ENCODE measurements at regions of chr12 and their contacts with region 1.

Region 1: DNA sequence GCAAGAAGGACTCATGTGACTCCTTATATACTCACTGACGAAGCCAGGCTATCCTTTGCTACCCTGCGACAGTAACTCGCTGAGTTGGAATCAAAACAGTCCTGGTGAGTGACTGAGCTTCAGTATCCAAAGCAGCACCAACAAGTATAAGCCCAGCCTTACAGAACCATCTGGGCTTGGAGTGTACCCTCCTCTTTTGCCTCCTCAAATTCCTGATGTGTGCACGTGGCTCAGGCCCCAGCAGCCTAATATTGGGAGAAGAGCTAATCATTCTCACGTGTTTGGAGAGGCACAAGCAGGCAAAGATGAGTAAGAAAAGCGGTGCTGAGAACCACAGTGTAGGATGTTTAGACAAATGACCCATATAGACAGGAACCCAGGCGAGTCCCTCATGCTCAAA is 34.4 kb downstream of the PPTC7 start:
- DNase-seq: no peak
- CTCF ChIP-seq: no peak

Region 2: DNA sequence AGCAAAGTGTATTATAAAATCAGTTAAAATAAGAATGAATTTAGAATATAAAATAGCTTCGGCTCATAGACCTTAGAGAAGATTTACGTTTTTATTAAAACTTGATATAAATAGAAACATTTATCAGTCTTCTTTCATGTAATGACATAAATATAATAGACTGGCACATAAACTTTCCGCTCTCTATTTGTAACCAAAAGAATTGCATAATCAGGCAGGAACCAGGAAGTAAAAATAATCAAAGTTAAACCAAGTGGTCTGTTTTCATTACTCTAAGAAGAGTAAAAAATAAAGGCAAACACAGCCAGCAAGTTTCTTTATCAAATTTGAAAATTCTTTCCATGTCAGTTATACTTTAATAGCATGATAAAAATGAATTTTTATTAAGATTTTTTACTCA is 313.9 kb before region 1 on chr12:
- CTCF ChIA-PET with region 1: no interaction called
- POLR2A ChIA-PET with region 1: no interaction called
- DNase-seq: no peak
- CTCF ChIP-seq: no peak

Region 3: DNA sequence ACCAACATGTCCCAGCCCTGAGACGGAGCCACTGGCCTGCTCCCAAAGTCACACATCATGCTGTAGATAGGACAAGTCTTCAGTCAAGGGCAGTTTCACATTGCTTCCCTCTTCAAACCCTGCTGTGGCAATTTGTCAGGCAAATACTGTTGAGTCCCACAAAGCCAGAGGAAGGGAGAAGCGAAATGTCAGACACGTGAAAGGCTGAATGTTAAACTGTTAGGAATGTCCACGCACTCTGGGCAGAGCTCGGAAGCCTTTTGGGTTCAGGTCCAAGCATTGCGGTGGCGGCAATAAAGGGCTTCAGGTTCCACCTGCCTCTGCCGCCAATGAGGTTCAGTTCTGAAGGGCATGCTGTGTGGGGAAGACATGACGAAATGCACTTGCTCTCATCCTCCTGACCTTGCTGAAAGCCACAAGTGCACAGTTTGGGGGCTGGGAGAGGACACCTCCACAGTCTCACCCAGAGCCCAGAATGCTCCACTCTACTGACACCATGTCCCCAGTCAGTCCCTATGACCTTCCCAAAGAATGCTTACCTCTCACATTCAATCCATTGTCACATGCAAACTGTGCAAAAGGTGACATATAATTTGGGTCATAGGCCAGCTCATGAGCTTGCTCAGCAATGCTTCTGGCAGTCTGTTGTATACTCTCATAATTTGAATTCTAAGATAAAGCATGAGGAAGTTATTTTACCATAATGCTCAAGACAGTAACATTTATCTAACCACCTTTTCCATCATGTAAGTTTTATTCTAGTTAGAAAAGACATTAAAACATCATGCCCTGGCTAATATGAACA is 10.9 kb before region 1 on chr12:
- CTCF ChIA-PET with region 1: interaction called, 18 read pairs
- POLR2A ChIA-PET with region 1: no interaction called
- DNase-seq: no peak
- CTCF ChIP-seq: no peak

Region 4: GRCh38 chr12:110563702-110564640 is 15.3 kb after region 1 on chr12:
- CTCF ChIA-PET with region 1: interaction called, 21 read pairs
- POLR2A ChIA-PET with region 1: no interaction called
- DNase-seq: no peak
- CTCF ChIP-seq: no peak